ENCODE measurements at regions of chr1 and their contacts with region 1.

Region 1: GRCh38 chr1:86018283-86018923 is 138.2 kb downstream of the COL24A1 start:
- DNase-seq: peak; percentile 31
- H3K4me3 ChIP-seq: no peak overlapping the region
- H3K27ac ChIP-seq: no peak overlapping the region
- H3K4me1 ChIP-seq: no peaks in the 10 kb centered on the region
- H3K27me3 ChIP-seq: no peaks in the 10 kb centered on the region
- CTCF ChIP-seq: peak; percentile 92
- EP300 ChIP-seq: no peak
- RAD21 ChIP-seq: peak; percentile 76

Region 2: DNA sequence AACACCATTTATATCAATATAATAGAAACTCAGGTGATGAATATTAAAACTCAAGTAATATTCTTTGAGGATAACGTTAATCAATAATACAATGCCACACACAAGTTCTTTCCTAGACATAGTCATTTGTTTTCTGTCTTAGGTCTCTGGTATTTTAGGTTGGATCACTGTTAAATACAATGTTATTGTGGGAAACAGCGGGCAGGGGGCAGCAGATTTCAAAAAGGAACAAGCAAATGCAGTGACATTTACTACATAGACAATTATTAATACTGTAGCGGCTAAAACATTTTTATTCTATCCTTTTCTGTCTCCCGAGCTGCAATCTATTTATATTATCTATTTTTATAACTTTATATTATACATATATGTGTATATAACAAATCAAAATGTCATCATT is 123.8 kb before region 1 on chr1:
- CTCF ChIA-PET with region 1: interaction called, 68 read pairs
- POLR2A ChIA-PET with region 1: no interaction called
- DNase-seq: peak; percentile 59
- H3K4me3 ChIP-seq: no peak overlapping the region; a peak in 1 of 4 replicates
- H3K27ac ChIP-seq: no peak overlapping the region
- H3K4me1 ChIP-seq: no peaks in the 10 kb centered on the region
- H3K27me3 ChIP-seq: no peaks in the 10 kb centered on the region
- CTCF ChIP-seq: peak; percentile 61
- EP300 ChIP-seq: no peak
- RAD21 ChIP-seq: peak; percentile 77

Region 3: GRCh38 chr1:85911742-85912141 is 106.7 kb before region 1 on chr1:
- CTCF ChIA-PET with region 1: interaction called, 11 read pairs
- POLR2A ChIA-PET with region 1: no interaction called
- DNase-seq: no peak
- H3K4me3 ChIP-seq: peak overlapping the region in 1 of 2 experiments; percentile 9; a peak in 1 of 4 replicates
- H3K27ac ChIP-seq: no peak overlapping the region
- H3K4me1 ChIP-seq: no peaks in the 10 kb centered on the region
- H3K27me3 ChIP-seq: no peaks in the 10 kb centered on the region; the same call in 1 of the 2 replicates
- CTCF ChIP-seq: peak; percentile 47
- EP300 ChIP-seq: no peak
- RAD21 ChIP-seq: peak; percentile 25; the same call in 1 of the 2 replicates

Region 4: GRCh38 chr1:85992791-85993190 is 25.6 kb before region 1 on chr1:
- CTCF ChIA-PET with region 1: interaction called, 11 read pairs
- POLR2A ChIA-PET with region 1: no interaction called
- DNase-seq: no peak
- H3K4me3 ChIP-seq: no peak overlapping the region
- H3K27ac ChIP-seq: no peak overlapping the region
- H3K4me1 ChIP-seq: no peaks in the 10 kb centered on the region
- H3K27me3 ChIP-seq: no peaks in the 10 kb centered on the region
- CTCF ChIP-seq: no peak
- EP300 ChIP-seq: no peak
- RAD21 ChIP-seq: no peak

Region 5: DNA sequence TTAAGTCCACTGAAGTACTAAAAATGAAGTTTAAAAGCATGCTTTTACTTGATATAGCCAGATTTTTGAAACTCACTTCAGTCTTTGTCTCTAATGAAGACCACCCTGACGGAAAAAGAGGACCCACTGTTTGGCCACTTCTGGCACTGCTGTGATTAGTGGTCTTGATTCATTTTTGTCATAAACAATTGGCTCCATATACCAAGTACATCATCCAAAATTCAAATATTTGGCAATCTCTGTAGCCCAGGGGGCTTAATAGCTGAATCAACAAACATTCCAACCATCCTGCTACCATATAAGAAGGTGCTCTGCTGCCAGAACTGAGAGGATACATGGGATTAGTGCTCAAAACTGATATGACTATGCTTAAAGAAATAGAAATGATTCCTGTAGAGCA is 17.8 kb before region 1 on chr1:
- CTCF ChIA-PET with region 1: interaction called, 18 read pairs
- POLR2A ChIA-PET with region 1: no interaction called
- DNase-seq: no peak
- H3K4me3 ChIP-seq: no peak overlapping the region
- H3K27ac ChIP-seq: no peak overlapping the region
- H3K4me1 ChIP-seq: no peaks in the 10 kb centered on the region
- H3K27me3 ChIP-seq: no peaks in the 10 kb centered on the region
- CTCF ChIP-seq: no peak
- EP300 ChIP-seq: no peak
- RAD21 ChIP-seq: no peak

Region 6: GRCh38 chr1:86035101-86035500 is 16.7 kb after region 1 on chr1:
- CTCF ChIA-PET with region 1: interaction called, 41 read pairs
- POLR2A ChIA-PET with region 1: no interaction called
- DNase-seq: no peak
- H3K4me3 ChIP-seq: no peak overlapping the region
- H3K27ac ChIP-seq: no peak overlapping the region
- H3K4me1 ChIP-seq: no peaks in the 10 kb centered on the region
- H3K27me3 ChIP-seq: no peaks in the 10 kb centered on the region
- CTCF ChIP-seq: no peak
- EP300 ChIP-seq: no peak
- RAD21 ChIP-seq: no peak